Left ventricle myocardium inferior (tissue), 1 donor: ENCODE measurements at regions of chr9 and their contacts with region 1.

Region 1: DNA sequence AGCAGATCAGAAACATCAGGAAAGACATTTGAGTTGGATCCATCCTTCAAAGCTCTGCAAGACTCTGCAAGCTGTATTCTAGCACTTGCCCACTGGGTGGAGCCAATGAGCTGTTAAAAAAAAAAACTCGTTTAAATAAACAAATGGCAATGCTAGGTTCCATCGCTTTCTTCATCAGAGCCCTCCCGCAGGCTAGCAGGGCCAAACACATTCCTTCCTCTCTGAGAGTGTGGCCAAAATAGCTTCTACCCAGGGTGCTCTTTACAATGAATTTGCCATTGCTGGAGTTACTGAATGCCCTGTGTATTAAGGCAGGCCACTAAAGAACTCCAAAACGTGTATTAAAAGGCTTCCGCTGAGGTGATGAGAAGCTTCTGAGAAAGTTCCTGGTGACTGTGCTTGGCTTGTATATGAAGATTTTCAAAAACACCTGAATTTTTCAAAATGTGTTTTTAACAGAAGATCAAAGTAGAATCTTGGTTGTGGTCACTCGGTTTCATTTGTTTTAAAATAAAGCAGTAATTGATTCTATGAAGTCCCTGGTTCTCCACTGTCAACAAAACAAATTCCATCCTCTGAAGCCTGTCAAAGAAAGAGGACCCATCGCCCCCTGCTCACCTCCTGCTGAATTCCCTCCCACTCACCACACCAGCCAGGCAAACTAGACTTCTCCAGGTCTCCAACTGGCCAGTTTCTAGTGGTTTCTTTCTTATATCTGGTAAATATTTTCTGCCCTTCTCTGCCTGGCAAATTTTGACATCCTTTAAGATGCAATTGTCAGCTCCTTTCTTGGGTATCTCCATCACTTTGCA is 36.5 kb upstream of the EQTN start:
- DNase-seq: peak; percentile 46
- H3K4me3 ChIP-seq: no peak overlapping the region
- H3K27ac ChIP-seq: peak overlapping the region; percentile 10
- H3K4me1 ChIP-seq: peaks cover 24% of the 10 kb centered on the region
- H3K27me3 ChIP-seq: no peaks in the 10 kb centered on the region
- CTCF ChIP-seq: peak; percentile 93

Region 2: GRCh38 chr9:27529316-27530278 is 196.2 kb after region 1 on chr9 and contains the start of gene MOB3B:
- intact Hi-C with region 1: loop called (anchors 5 kb)
- DNase-seq: peak; percentile 86
- H3K4me3 ChIP-seq: peak within 1 kb of the TSS; percentile 89
- H3K27ac ChIP-seq: peak within 1 kb of the TSS; percentile 81
- H3K4me1 ChIP-seq: peaks cover 50% of the 10 kb centered on the region
- H3K27me3 ChIP-seq: no peaks in the 10 kb centered on the region
- CTCF ChIP-seq: peak; percentile 96
- total RNA-seq, gene MOB3B: 2.1 TPM

Region 3: GRCh38 chr9:27548055-27548741 is 214.8 kb after region 1 on chr9:
- intact Hi-C with region 1: loop called (anchors 2 kb)
- DNase-seq: no peak
- H3K4me3 ChIP-seq: no peak overlapping the region
- H3K27ac ChIP-seq: peak overlapping the region; percentile 48
- H3K4me1 ChIP-seq: peaks cover 13% of the 10 kb centered on the region
- H3K27me3 ChIP-seq: no peaks in the 10 kb centered on the region
- CTCF ChIP-seq: peak; percentile 64